ENCODE measurements at regions of chr15 and their contacts with region 1.

Region 1: DNA sequence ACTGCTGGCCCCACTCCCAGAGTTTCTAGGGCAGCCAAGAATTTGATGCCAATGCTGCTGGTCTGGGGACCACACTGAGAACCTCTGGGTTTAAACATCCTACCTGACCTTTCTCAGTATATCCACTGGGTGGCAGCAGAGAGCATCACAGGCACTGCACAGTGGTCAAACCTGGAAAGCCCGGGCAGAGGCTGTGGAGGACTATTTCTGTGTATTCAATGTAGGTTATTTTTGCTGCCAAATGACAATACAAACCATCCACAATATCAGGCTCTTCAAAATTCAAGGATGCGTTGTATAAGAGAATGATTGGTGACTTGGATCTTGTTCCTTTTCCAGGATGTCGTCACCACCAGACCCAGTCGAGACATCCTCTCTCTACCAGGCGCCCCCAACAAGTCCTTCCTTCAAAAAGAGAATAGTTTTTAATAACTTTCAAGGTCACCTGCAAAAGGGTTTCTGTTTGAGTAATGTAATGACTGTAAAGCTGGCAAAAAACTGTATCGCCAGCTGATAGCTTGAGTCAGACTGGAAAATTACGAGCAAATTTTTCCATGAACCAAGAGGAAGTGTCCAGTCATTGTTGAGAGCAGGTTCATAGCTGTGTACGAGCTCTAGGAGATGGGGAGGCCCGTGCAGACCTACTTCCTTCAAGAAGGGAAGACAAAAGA is 30.5 kb upstream of the MYZAP start:
- DNase-seq: peak; percentile 47 to 87
- ATAC-seq: peak; percentile 86 to 94 (median 92)
- H3K4me3 ChIP-seq: peak overlapping the region in 4 of 10 donors; percentile 3 to 30 (median 12)
- H3K27ac ChIP-seq: peak overlapping the region; percentile 33 to 84 (median 74)
- H3K4me1 ChIP-seq: peaks cover 0 to 39% (median 25%) of the 10 kb centered on the region in 9 donors
- H3K27me3 ChIP-seq: peaks cover 0 to 4% (median 0%) of the 10 kb centered on the region in 7 donors
- CTCF ChIP-seq: peak; percentile 92 to 98 (median 94)

Region 2: DNA sequence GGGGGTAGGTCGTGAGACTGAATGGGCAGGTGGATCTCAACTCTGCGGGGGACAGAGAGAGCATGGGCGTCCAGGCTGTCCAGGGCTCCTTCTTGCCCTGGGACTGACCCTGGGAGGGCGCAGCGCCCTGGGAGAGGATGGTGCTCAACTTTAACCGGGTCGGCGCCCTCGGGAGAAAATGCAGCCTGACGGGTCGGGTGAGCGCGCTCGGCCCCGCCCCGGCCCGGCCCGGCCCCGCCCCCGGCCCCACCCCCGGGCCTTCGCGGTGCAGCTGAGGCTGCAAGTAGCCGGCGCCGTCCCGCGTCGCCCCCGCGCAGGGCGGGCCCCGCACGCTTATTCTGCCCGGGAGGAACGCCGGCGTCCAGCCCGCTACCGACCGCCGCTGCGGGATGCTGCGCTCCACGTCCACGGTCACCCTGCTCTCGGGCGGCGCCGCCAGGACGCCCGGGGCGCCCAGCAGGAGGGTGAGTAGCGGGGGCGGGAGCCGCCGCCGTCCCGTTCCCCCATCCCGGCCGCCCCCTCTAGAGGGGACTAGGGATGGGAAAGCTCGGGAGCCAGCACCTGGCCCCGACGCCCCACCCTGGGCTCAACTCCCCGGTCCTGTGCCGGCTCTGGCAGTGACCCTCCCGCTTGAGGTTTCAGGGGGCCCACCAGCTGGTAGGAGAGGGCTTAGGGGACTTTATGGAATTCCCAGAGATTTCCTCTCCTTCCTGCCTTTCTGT is 30.6 kb after region 1 on chr15 and contains the start of gene MYZAP:
- intact Hi-C with region 1: loop called in 4 of 10 experiments (anchors 2 to 5 kb)
- DNase-seq: peak; percentile 61 to 74
- ATAC-seq: peak; percentile 39 to 80 (median 62)
- H3K4me3 ChIP-seq: peak within 1 kb of the TSS; percentile 42 to 86 (median 78)
- H3K27ac ChIP-seq: peak within 1 kb of the TSS; percentile 75 to 95 (median 91)
- H3K4me1 ChIP-seq: peaks cover 3 to 69% (median 34%) of the 10 kb centered on the region in 9 donors
- H3K27me3 ChIP-seq: peaks cover 0 to 19% (median 0%) of the 10 kb centered on the region in 7 donors
- CTCF ChIP-seq: peak in 1 of 9 donors; percentile 26
- total RNA-seq, gene MYZAP: 505 to 1,280 (median 954) TPM

Region 3: DNA sequence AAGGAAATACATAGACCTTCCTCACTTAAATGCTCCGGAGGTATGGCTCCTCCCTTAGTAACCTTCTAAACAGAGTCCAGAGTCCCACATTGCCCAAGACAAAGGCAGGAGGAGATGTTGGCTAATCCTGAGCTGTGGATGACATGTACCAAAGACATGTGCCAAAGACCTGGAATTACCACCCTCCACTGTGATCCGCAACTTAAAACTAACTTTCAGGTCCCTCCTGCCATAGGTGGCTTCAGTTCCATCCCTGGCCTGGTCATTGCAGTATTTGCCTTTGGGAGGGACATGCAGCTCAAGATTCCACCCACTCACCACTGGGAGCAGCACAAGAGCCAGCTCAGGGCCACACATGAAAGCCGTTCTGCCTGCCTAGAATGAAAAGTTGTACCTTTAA is 58.6 kb after region 1 on chr15:
- intact Hi-C with region 1: loop called in 4 of 10 experiments (anchors 5 to 10 kb)
- DNase-seq: no peak
- ATAC-seq: peak in 6 of 8 donors; percentile 31 to 86 (median 60)
- H3K4me3 ChIP-seq: no peak overlapping the region
- H3K27ac ChIP-seq: peak overlapping the region in 8 of 10 donors; percentile 13 to 93 (median 30)
- H3K4me1 ChIP-seq: peaks cover 2 to 85% (median 57%) of the 10 kb centered on the region in 9 donors
- H3K27me3 ChIP-seq: no peaks in the 10 kb centered on the region
- CTCF ChIP-seq: peak in 3 of 9 donors; percentile 19 to 37 (median 33)

Region 4: GRCh38 chr15:57647791-57648130 is 86.6 kb after region 1 on chr15:
- intact Hi-C with region 1: loop called in 1 of 10 experiments (anchors 2 kb)
- DNase-seq: no peak
- ATAC-seq: peak; percentile 22 to 71 (median 52)
- H3K4me3 ChIP-seq: peak overlapping the region in 4 of 10 donors; percentile 12 to 25 (median 22)
- H3K27ac ChIP-seq: peak overlapping the region; percentile 48 to 86 (median 74)
- H3K4me1 ChIP-seq: peaks cover 0 to 82% (median 43%) of the 10 kb centered on the region in 9 donors
- H3K27me3 ChIP-seq: no peaks in the 10 kb centered on the region
- CTCF ChIP-seq: no peak

Region 5: GRCh38 chr15:57680021-57680420 is 118.8 kb after region 1 on chr15:
- intact Hi-C with region 1: no loop called
- DNase-seq: no peak
- ATAC-seq: peak in 2 of 8 donors; percentile 29 to 54
- H3K4me3 ChIP-seq: no peak overlapping the region
- H3K27ac ChIP-seq: peak overlapping the region in 8 of 10 donors; percentile 6 to 68 (median 37)
- H3K4me1 ChIP-seq: peaks cover 0 to 67% (median 26%) of the 10 kb centered on the region in 9 donors
- H3K27me3 ChIP-seq: no peaks in the 10 kb centered on the region
- CTCF ChIP-seq: no peak

Region 6: DNA sequence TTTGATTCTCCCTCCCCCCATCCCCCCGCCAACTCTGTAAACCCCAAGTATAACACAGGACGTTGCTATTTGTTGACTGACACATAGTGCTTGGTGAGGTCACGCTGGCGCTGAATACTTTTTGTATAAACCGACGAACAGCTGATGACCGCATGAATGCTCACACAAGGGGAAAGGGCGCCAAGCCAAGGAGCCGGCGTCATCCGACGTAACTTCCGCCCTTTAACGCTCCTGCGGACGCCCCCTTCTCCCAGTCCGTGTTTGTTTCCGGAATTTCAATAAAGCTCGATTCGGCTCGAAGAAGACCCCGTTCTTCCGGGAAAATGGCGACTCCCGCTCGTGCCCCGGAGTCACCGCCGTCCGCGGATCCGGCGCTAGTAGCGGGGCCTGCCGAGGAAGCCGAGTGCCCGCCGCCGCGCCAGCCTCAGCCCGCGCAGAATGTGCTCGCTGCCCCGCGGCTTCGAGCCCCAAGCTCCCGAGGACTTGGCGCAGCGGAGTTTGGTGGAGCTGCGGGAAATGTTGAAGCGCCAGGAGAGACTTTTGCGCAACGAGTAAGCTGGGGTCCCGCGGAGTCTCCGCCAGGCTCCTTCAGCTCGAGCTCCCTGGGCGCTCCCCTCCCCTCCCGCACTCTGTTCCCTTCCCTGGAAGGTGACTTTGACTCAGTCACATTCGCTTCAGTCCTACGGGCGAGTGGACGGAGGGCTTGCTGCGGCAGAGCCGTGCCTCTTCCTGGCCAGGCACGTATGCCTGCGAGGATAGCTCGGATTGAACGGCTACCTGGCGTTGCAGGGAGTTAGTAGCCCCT is 145.4 kb after region 1 on chr15 and contains the start of gene POLR2M:
- intact Hi-C with region 1: loop called in 6 of 10 experiments (anchors 5 to 10 kb)
- DNase-seq: peak; percentile 94 to 97
- ATAC-seq: peak; percentile 93 to 97 (median 95)
- H3K4me3 ChIP-seq: peak within 1 kb of the TSS; percentile 65 to 97 (median 86)
- H3K27ac ChIP-seq: peak within 1 kb of the TSS; percentile 90 to 100 (median 98)
- H3K4me1 ChIP-seq: peaks cover 0 to 50% (median 34%) of the 10 kb centered on the region in 9 donors
- H3K27me3 ChIP-seq: no peaks in the 10 kb centered on the region
- CTCF ChIP-seq: no peak
- total RNA-seq, gene POLR2M: 42.1 to 89.2 (median 56.5) TPM

Region 7: DNA sequence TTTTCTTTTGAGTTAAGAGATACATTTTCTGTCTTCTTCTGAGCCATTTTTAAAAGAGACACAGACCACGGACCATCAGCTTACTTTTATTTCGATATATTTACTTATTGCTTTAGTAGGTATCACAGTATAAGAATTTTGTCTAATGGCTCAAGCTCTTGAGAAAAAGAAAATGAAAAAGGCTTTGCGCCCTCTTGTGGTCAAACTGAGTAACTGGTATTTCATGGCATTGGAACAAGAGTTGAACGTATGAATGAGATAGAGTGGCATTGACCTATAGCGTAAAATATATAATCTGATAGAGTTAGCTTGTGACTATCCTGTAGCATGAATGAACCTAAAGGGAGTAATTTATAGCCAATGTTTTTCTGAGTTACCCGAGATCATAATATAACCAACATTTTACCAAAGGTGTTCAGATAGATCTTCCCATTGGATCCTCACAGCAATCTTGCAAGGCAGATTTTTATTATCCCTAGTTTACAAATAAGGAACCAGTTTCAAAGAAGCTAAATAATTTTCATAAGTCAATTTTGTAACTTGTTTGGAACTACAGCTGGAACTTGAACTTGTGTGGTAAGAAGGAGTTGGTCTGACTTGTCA is 300.0 kb after region 1 on chr15:
- intact Hi-C with region 1: loop called in 7 of 10 experiments (anchors 2 to 10 kb)
- DNase-seq: peak in 1 of 2 donors; percentile 36
- ATAC-seq: peak in 6 of 8 donors; percentile 31 to 57 (median 48)
- H3K4me3 ChIP-seq: no peak overlapping the region
- H3K27ac ChIP-seq: no peak overlapping the region
- H3K4me1 ChIP-seq: peaks cover 0 to 9% (median 6%) of the 10 kb centered on the region in 9 donors
- H3K27me3 ChIP-seq: no peaks in the 10 kb centered on the region
- CTCF ChIP-seq: peak; percentile 76 to 91 (median 85)

Region 8: DNA sequence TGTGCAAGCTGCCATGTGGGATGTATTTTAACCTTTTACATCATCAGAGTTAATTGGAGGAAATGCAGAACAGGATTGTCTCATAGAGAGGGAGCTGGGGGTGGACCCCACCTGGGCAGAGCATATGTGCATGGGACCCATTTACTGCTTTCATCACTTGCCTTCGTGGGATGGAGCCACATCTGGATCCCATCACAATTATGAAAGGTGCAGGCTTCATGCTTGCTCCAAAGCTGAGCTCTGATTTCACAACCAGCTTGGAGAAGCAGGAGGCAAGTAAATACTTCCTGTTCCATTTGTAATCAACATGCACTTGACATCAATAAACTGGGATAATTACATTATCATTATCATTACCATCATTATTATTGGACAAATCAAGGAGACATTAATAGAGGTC is 342.4 kb after region 1 on chr15:
- intact Hi-C with region 1: no loop called
- DNase-seq: no peak
- ATAC-seq: no peak
- H3K4me3 ChIP-seq: no peak overlapping the region
- H3K27ac ChIP-seq: no peak overlapping the region
- H3K4me1 ChIP-seq: no peaks in the 10 kb centered on the region
- H3K27me3 ChIP-seq: peaks cover 0 to 5% (median 0%) of the 10 kb centered on the region in 7 donors
- CTCF ChIP-seq: no peak

Region 9: DNA sequence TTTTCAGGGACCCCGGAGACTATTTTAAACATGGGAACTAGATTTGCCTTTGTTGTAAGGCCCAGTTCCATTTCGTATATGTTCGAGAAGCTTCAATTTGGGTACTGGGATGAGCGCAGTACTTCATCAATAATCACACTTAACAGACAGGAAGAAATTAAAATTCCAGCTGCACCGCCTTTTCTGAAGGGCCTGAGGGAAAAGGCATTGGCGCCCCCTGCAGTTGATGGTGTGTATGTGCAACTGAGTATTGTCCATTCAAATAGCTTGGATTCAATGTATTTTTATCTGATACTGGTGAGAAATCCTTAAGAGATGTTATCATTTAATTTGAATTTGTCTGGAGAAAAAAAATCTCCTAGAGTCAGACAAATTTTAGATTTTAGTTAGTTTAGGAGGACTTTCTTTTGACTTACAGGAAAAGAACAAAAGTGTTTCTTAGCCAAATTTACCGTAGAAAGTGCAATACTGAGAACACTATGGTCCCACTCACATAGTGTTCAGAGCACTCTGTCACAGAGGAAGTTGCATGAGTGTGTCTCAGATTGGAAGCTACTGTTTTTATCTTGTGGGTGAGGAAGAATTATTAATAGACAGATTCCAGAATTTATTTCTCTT is 509.7 kb after region 1 on chr15:
- intact Hi-C with region 1: loop called in 7 of 10 experiments (anchors 2 to 10 kb)
- DNase-seq: peak; percentile 53 to 55
- ATAC-seq: peak in 1 of 8 donors; percentile 51
- H3K4me3 ChIP-seq: no peak overlapping the region
- H3K27ac ChIP-seq: no peak overlapping the region
- H3K4me1 ChIP-seq: peaks cover 0 to 9% (median 4%) of the 10 kb centered on the region in 9 donors
- H3K27me3 ChIP-seq: peaks cover 0 to 81% (median 15%) of the 10 kb centered on the region in 7 donors
- CTCF ChIP-seq: peak; percentile 86 to 98 (median 95)